Activated naive CD4-positive, alpha-beta T cell treated with anti-CD3 and anti-CD28 coated beads, Interleukin-2, amount 10 ng/mL, durations not matched to agents 7 days and 5 days (primary cell): ENCODE measurements at regions of chr18 and their contacts with region 1.

Region 1: DNA sequence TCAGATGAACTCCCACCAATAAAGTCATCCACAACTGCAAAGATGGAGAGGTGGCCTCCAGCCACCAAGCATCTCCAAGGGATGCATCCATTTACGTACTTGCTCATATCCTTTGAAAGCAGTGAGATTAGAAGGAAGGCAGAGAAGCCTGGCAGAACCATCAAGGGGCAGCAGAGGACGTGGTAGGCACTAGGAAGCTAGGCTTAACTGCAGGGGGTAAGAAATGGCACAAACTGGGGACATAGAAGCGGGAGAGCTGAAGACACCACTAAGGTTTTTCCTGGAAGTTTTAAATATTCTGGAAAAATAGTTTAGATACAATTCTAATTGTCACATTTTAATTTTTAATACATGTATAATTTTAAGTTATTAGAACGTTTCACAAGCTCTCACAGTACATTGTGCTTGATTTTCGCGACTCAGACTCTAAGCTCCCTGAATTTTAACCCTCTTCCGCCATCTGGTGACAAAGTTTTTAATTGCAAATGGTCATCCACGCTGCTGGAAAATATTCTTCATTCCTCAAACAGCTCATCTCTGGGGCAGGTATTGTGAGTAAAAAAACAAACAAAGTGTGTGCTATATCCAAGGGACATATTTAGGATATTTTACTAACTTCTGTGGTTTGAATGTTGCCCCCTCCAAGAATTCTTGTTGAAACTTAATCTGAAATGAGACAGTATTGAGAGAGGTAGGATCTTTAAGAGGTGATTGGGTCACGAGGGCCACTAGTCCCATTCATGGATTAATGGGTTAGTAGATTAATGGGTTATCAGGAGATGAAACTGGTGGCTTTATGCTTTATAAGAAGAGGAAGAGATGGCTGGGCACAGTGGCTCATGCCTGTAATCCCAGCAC is 1.6 kb upstream of the PSTPIP2 start:
- DNase-seq: peak; percentile 64
- H3K4me3 Mint-ChIP-seq: no peak overlapping the region
- H3K27ac Mint-ChIP-seq: no peak overlapping the region
- H3K4me1 Mint-ChIP-seq: peaks cover 26% of the 10 kb centered on the region
- H3K27me3 Mint-ChIP-seq: peaks cover 12% of the 10 kb centered on the region

Region 2: DNA sequence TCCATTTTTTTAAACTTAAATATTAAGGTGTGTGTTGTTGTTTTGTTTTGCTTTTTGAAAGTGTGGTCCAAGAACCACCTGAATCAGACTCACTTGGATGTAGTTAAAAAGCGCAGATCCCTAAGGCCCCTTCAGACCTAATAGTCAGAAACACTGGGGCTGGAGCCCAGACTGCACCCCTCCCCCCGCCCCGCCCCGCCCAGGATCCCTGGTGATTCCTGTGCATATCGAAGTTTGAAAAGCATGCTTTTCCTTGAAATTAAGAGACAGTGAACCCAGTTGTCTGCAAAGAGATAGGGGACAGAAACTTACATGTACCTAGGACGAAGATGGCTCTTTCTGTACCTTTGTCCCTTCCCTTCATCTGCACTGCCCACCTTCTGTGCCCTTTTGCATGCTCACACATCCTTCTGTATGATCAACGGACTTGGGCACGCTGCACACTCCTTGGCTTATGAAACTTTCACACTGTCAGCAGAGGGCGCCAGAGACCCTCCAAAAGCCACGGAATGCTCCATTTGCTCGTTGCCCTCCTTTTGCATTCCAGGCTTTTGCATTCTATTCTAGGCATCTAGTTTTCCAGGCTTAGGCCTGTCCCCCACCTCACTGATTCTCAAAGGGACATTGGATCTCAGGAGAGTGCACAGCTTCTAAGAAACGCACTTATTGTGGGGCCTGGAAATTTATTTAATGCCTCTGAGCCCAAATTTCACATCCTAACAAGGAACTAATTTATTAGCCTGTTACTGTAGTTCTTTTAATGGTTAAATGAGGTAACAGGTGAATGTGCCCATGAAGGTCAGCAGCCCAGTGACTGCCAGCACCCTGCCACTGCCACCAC is 382.5 kb before region 1 on chr18:
- CTCF ChIA-PET with region 1: interaction called, 11 read pairs
- DNase-seq: peak; percentile 83
- H3K4me3 Mint-ChIP-seq: no peak overlapping the region
- H3K27ac Mint-ChIP-seq: no peak overlapping the region
- H3K4me1 Mint-ChIP-seq: peaks cover 44% of the 10 kb centered on the region
- H3K27me3 Mint-ChIP-seq: peaks cover 37% of the 10 kb centered on the region

Region 3: DNA sequence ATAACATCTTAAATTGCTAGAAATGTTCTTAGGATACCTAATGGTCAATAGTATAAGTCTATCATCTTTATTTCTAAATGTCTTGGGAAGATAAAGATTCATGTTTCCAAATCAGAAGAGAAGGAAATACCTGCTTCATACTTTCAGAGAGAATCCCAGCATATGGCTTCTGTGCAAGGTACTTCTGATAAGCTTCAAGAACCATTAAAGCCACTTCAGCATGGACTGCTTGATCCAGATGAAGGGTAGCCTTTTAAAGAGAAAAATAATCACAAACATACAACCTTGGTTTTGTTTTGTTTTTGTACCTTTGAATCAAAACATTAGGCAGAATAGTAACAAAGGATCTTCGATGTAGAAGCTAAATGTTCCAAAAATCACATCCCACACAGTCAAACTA is 150.6 kb before region 1 on chr18:
- CTCF ChIA-PET with region 1: interaction called, 36 read pairs
- DNase-seq: no peak
- H3K4me3 Mint-ChIP-seq: no peak overlapping the region
- H3K27ac Mint-ChIP-seq: no peak overlapping the region
- H3K4me1 Mint-ChIP-seq: peaks cover 7% of the 10 kb centered on the region
- H3K27me3 Mint-ChIP-seq: no peaks in the 10 kb centered on the region

Region 4: DNA sequence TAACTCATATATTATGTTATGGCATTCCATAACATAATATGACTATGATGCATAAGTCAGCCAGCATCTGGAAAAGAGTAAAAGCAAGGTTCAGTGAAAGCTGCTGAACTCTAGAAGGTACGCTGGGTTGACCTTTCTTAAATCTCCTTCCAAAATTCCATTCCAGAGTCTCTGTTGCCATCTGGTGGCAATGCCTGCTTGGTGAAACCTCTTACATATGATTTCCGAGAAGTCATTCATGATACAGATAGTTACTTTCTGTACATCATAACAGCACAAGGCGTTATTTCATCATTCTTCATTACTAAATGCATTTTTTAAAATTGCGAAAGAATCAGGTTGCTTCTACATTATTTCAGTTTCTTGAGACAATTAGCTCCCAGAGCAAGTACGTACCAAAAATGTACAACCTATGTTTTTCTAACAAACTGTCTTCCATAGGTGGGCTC is 99.6 kb before region 1 on chr18:
- CTCF ChIA-PET with region 1: interaction called, 36 read pairs
- DNase-seq: peak; percentile 82
- H3K4me3 Mint-ChIP-seq: no peak overlapping the region
- H3K27ac Mint-ChIP-seq: peak overlapping the region; percentile 82
- H3K4me1 Mint-ChIP-seq: peaks cover 8% of the 10 kb centered on the region
- H3K27me3 Mint-ChIP-seq: no peaks in the 10 kb centered on the region

Region 5: DNA sequence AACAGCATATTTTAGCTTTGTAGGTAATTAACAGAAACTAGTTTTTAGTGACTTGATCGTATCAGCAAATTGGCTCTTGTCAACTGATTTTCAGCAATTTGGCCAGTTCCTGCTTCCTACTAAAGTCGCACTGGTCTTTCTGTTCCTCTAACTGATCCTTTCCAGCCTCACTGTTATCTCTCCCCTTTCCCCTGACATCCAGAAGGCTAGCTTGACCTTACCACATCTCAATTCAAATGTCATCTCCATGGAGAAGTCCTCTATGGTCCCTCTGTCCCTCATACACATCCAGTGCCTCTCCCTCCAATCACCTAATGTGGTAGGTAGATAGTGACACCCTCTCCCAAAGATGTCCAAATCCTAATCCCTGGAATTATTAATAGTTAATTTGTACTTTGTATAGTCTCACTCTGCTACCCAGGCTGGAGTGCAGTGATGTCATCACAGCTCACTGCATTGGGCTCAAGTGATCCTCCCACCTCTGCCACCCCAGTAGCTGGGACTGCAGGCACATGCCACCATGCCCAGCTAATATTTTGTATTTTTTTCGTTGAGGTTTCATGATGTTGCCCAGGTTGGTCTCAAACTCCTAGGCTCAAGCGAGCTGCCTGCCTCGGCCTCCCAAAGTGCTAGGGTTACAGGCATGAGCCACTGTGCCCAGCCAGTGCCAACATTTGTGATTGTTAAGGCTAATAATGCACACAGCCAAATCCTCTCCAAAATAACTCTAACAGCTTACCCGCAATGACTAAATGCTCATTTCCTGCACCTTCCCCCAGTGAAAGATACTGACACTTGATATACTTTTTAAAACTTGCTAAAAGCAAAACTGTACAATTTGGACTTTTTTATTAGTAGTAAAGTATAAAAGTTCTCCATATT is 18.5 kb before region 1 on chr18:
- CTCF ChIA-PET with region 1: interaction called, 18 read pairs
- DNase-seq: no peak
- H3K4me3 Mint-ChIP-seq: no peak overlapping the region
- H3K27ac Mint-ChIP-seq: peak overlapping the region; percentile 38
- H3K4me1 Mint-ChIP-seq: peaks cover 29% of the 10 kb centered on the region
- H3K27me3 Mint-ChIP-seq: no peaks in the 10 kb centered on the region